Stomach (tissue), 19 donors: ENCODE measurements at regions of chr1 and their contacts with region 1.

Region 1: GRCh38 chr1:154463512-154463990 is 38.5 kb upstream of the TDRD10 start:
- DNase-seq: no peak
- H3K4me3 ChIP-seq: no peak overlapping the region
- H3K27ac ChIP-seq: peak overlapping the region in 4 of 5 donors; percentile 44 to 75 (median 66)
- H3K4me1 ChIP-seq: peaks cover 0 to 54% (median 14%) of the 10 kb centered on the region in 4 donors
- H3K27me3 ChIP-seq: no peaks in the 10 kb centered on the region
- CTCF ChIP-seq: no peak
- EP300 ChIP-seq: no peak
- POLR2A ChIP-seq: no peak

Region 2: GRCh38 chr1:154404984-154405761 is 58.4 kb before region 1 on chr1 and contains the start of gene IL6R:
- intact Hi-C with region 1: loop called (anchors 10 kb)
- DNase-seq: peak; percentile 91 to 95
- H3K4me3 ChIP-seq: peak within 1 kb of the TSS; percentile 65 to 79 (median 74)
- H3K27ac ChIP-seq: peak within 1 kb of the TSS; percentile 88 to 99 (median 98)
- H3K4me1 ChIP-seq: peaks cover 37 to 80% (median 53%) of the 10 kb centered on the region in 4 donors
- H3K27me3 ChIP-seq: no peaks in the 10 kb centered on the region
- CTCF ChIP-seq: peak in 5 of 7 experiments; percentile 19 to 67 (median 40)
- EP300 ChIP-seq: peak; percentile 50
- POLR2A ChIP-seq: peak in 1 of 4 donors; percentile 38
- total RNA-seq, gene IL6R: 12.7 to 73.9 (median 37.4) TPM